H1 (cell line): ENCODE measurements at regions of chr20 and their contacts with region 1.

Region 1: GRCh38 chr20:667391-667964 is 8.1 kb downstream of the SCRT2 start:
- DNase-seq: peak in 1 of 2 experiments; percentile 93
- H3K4me3 ChIP-seq: no peak overlapping the region
- H3K27ac ChIP-seq: no peak overlapping the region
- H3K4me1 ChIP-seq: peaks cover 2 to 21% (median 13%) of the 10 kb centered on the region in 4 experiments
- H3K27me3 ChIP-seq: peaks cover 8 to 26% (median 22%) of the 10 kb centered on the region in 4 experiments
- CTCF ChIP-seq: peak; percentile 87 to 96 (median 92)
- EP300 ChIP-seq: no peak
- POLR2A ChIP-seq: no peak
- RAD21 ChIP-seq: peak; percentile 64 to 79

Region 2: GRCh38 chr20:561437-562231 is 105.8 kb before region 1 on chr20:
- CTCF ChIA-PET with region 1: interaction called, 29 read pairs
- POLR2A ChIA-PET with region 1: no interaction called
- DNase-seq: peak in 1 of 2 experiments; percentile 83
- H3K4me3 ChIP-seq: no peak overlapping the region
- H3K27ac ChIP-seq: no peak overlapping the region
- H3K4me1 ChIP-seq: no peaks in the 10 kb centered on the region
- H3K27me3 ChIP-seq: no peaks in the 10 kb centered on the region
- CTCF ChIP-seq: peak; percentile 74 to 99 (median 95)
- EP300 ChIP-seq: no peak
- POLR2A ChIP-seq: no peak
- RAD21 ChIP-seq: peak; percentile 98

Region 3: GRCh38 chr20:645318-646106 is 22.0 kb before region 1 on chr20:
- CTCF ChIA-PET with region 1: interaction called, 157 read pairs
- POLR2A ChIA-PET with region 1: interaction called, 19 read pairs
- DNase-seq: peak; percentile 82 to 96
- H3K4me3 ChIP-seq: no peak overlapping the region
- H3K27ac ChIP-seq: no peak overlapping the region
- H3K4me1 ChIP-seq: peaks cover 0 to 4% (median 1%) of the 10 kb centered on the region in 4 experiments; a peak in 2 of 7 replicates
- H3K27me3 ChIP-seq: no peaks in the 10 kb centered on the region
- CTCF ChIP-seq: peak; percentile 87 to 96 (median 96)
- EP300 ChIP-seq: peak in 1 of 2 experiments; percentile 50; a peak in 1 of 3 replicates
- POLR2A ChIP-seq: no peak
- RAD21 ChIP-seq: peak; percentile 94 to 95

Region 4: DNA sequence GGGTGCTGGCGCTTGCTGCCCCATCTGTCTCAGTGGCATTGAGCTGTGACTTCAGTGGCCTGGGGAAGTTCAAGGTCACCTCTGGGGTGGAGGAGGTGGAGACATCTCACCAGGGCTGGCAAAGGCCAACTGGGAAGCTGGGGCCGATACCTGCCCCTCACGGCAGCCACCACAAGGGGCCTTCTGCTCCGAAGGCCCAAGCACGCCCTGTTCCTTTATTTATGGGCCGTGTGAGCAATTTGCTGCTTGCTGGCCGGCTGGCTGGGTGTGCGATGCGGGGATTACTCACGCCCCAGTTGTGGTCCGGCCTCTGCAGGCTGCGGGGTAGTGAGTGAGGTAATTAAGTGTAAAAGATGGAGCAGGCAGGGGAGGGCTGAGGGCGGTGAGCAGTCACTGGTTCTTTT is 21.3 kb after region 1 on chr20:
- CTCF ChIA-PET with region 1: interaction called, 116 read pairs
- POLR2A ChIA-PET with region 1: interaction called, 3 read pairs
- DNase-seq: no peak
- H3K4me3 ChIP-seq: no peak overlapping the region
- H3K27ac ChIP-seq: no peak overlapping the region
- H3K4me1 ChIP-seq: peaks cover 0 to 12% (median 7%) of the 10 kb centered on the region in 4 experiments; a peak in 4 of 7 replicates
- H3K27me3 ChIP-seq: no peaks in the 10 kb centered on the region
- CTCF ChIP-seq: peak; percentile 14 to 46 (median 44); a peak in 3 of 4 replicates
- EP300 ChIP-seq: no peak
- POLR2A ChIP-seq: no peak
- RAD21 ChIP-seq: peak; percentile 17 to 45; a peak in 2 of 4 replicates

Region 5: DNA sequence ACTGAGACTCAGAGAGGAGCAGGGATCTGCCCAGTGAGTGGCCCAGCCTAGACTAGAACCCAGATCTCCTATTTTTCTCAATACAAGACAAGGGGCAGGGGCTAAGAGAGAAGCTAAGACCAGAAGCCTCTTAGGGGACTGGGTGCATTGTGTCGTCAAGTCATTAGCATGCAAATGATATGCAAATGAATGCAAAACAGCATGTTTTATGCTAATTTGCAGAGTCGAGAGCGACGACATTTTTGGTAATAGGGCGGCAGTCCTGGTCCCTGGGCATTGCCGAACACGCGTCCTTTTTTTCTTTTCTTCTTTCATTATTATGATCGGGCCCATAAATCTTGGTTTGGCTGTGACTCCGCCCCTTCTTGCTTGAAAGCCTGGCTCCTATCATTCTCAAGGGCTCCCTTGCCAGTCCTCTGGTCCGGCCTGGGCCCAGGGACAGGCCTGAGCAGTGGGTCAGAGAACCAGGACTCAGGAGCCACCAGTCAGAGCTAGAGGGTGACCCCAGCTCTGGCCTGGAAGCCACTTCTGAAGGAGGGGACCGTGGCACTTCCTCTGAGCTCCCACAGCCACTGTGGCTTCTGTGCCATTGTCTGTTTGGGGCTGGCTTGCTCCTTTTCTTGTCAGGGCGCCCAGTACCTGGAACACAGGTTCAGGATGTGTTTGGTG is 40.1 kb after region 1 on chr20:
- CTCF ChIA-PET with region 1: interaction called, 17 read pairs
- POLR2A ChIA-PET with region 1: no interaction called
- DNase-seq: no peak
- H3K4me3 ChIP-seq: no peak overlapping the region
- H3K27ac ChIP-seq: no peak overlapping the region
- H3K4me1 ChIP-seq: peaks cover 0 to 8% (median 2%) of the 10 kb centered on the region in 4 experiments; a peak in 1 of 7 replicates
- H3K27me3 ChIP-seq: peaks cover 1 to 13% (median 11%) of the 10 kb centered on the region in 4 experiments
- CTCF ChIP-seq: no peak
- EP300 ChIP-seq: no peak
- POLR2A ChIP-seq: no peak
- RAD21 ChIP-seq: no peak

Region 6: DNA sequence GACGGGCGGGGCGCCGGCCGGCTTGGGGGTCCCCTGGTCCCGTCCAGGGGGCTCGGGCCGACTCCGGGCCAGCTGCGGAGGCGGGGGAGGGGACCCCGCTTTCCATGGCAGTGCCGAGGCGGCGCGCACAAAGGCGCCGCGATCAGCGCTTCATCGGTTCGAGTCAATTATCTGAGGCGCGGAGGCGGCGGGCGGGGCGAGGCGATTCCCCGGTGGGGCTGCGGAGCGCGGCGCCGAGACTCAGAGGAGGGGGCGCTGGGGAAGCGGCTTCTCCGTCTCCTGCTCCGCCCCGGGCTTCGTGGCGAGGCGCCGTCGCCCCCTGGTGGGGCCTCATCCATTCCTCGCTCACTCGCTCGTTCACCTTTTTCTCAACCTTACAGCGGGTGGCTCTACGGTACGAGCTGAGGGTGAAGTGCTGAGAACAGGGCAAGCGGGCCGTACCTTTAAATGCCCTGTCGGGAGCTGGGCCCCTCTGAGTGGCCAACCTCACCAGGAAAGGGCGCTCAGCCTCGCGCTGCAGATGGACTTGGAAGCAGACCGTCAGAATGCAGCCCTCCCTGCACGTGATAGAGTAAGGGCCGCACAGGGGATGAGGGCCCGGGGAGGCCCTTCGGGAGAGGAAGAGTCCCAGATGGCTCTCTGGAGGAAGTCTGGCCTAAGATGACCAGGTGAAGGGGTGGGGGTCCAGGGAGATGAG is 60.9 kb after region 1 on chr20:
- CTCF ChIA-PET with region 1: interaction called, 18 read pairs
- POLR2A ChIA-PET with region 1: interaction called, 3 read pairs
- DNase-seq: peak; percentile 62 to 91
- H3K4me3 ChIP-seq: peak overlapping the region; percentile 34 to 68 (median 42)
- H3K27ac ChIP-seq: no peak overlapping the region
- H3K4me1 ChIP-seq: peaks cover 0 to 4% (median 2%) of the 10 kb centered on the region in 4 experiments; a peak in 4 of 7 replicates
- H3K27me3 ChIP-seq: peaks cover 0 to 12% (median 9%) of the 10 kb centered on the region in 4 experiments; a peak in 6 of 7 replicates
- CTCF ChIP-seq: peak; percentile 71 to 88 (median 78)
- EP300 ChIP-seq: no peak
- POLR2A ChIP-seq: no peak
- RAD21 ChIP-seq: peak; percentile 78 to 87